Endothelial cell of umbilical vein (primary cell): ENCODE measurements at regions of chr2 and their contacts with region 1.

Region 1: GRCh38 chr2:215920244-215921100 is 92.9 kb downstream of the MREG start:
- DNase-seq: peak; percentile 87
- H3K4me3 ChIP-seq: no peak overlapping the region
- H3K27ac ChIP-seq: no peak overlapping the region
- H3K4me1 ChIP-seq: peaks cover 12% of the 10 kb centered on the region
- H3K27me3 ChIP-seq: no peaks in the 10 kb centered on the region
- CTCF ChIP-seq: peak; percentile 76 to 93
- POLR2A ChIP-seq: no peak

Region 2: GRCh38 chr2:215396595-215397313 is 523.7 kb before region 1 on chr2:
- CTCF ChIA-PET with region 1: interaction called, 3 read pairs
- POLR2A ChIA-PET with region 1: no interaction called
- dilution Hi-C with region 1: no loop called
- intact Hi-C with region 1: loop called (anchors 2 kb)
- DNase-seq: no peak
- H3K4me3 ChIP-seq: no peak overlapping the region
- H3K27ac ChIP-seq: no peak overlapping the region
- H3K4me1 ChIP-seq: peaks cover 20% of the 10 kb centered on the region
- H3K27me3 ChIP-seq: no peaks in the 10 kb centered on the region
- CTCF ChIP-seq: no peak
- POLR2A ChIP-seq: no peak

Region 3: DNA sequence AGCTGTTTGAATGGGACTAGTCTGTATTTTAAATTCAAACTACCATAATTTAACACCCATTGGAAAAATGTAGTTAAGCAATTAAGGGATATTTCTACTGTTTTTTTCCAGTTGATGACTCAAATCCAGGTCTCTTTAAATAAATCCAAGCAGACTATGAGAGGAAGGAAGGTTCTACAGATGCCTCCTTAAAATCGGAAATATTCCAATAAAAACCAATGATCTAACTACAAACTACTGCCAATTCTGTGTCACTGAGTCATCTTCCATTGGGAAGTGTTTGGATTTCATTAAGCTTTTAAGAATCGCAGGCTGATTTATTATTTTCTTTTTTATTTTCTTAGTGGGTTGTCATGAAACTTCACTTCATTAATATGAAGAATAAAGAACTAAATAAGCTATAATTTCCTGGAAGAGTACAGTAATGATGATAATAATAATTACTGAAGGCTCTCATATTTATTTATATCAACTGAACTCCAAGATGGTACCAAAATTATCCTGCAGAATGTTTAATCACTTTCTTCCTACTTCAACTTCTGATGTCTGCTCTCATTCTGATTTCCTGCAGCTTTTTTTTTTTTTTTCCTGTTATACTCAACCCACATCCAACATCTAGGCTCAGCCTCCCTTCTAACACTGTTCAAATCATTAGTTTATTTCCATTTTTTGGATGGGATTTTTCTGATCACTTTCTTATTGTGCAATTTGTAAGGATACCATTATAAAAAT is 318.3 kb before region 1 on chr2:
- CTCF ChIA-PET with region 1: no interaction called
- POLR2A ChIA-PET with region 1: no interaction called
- dilution Hi-C with region 1: no loop called
- intact Hi-C with region 1: loop called (anchors 2 kb)
- DNase-seq: peak; percentile 97
- H3K4me3 ChIP-seq: peak overlapping the region in 1 of 3 experiments; percentile 19
- H3K27ac ChIP-seq: peak overlapping the region; percentile 85
- H3K4me1 ChIP-seq: peaks cover 24% of the 10 kb centered on the region
- H3K27me3 ChIP-seq: no peaks in the 10 kb centered on the region
- CTCF ChIP-seq: no peak
- POLR2A ChIP-seq: peak; percentile 62

Region 4: DNA sequence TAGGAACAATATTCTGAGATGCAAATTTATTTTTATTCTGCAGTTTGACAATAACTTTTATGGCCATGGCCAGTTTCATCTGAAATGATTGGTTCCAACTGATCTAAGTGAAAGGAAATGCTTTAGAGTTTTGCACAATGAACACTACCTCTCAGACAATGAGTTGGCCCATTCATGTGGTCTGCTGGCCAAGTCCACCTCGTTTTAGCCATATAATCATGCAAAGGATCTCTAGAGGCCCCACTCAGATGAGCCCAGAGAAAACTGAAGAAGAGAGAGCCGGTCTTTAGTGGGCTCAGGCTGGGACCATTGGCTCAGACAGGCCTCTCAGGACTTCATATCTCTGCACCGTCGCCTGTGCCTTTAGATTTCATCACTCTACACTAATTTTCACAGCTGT is 161.8 kb before region 1 on chr2:
- CTCF ChIA-PET with region 1: no interaction called
- POLR2A ChIA-PET with region 1: no interaction called
- dilution Hi-C with region 1: no loop called
- intact Hi-C with region 1: loop called (anchors 5 kb)
- DNase-seq: peak; percentile 87
- H3K4me3 ChIP-seq: no peak overlapping the region
- H3K27ac ChIP-seq: peak overlapping the region; percentile 69
- H3K4me1 ChIP-seq: peaks cover 39% of the 10 kb centered on the region
- H3K27me3 ChIP-seq: no peaks in the 10 kb centered on the region
- CTCF ChIP-seq: no peak
- POLR2A ChIP-seq: no peak

Region 5: GRCh38 chr2:215793747-215794595 is 126.5 kb before region 1 on chr2:
- CTCF ChIA-PET with region 1: interaction called, 5 read pairs
- POLR2A ChIA-PET with region 1: no interaction called
- dilution Hi-C with region 1: no loop called
- intact Hi-C with region 1: loop called (anchors 1 kb)
- DNase-seq: peak; percentile 97
- H3K4me3 ChIP-seq: no peak overlapping the region
- H3K27ac ChIP-seq: peak overlapping the region; percentile 82
- H3K4me1 ChIP-seq: peaks cover 44% of the 10 kb centered on the region
- H3K27me3 ChIP-seq: no peaks in the 10 kb centered on the region
- CTCF ChIP-seq: no peak
- POLR2A ChIP-seq: no peak

Region 6: GRCh38 chr2:215949991-215950404 is 29.5 kb after region 1 on chr2:
- CTCF ChIA-PET with region 1: no interaction called
- POLR2A ChIA-PET with region 1: no interaction called
- dilution Hi-C with region 1: no loop called
- intact Hi-C with region 1: no loop called
- DNase-seq: peak; percentile 52
- H3K4me3 ChIP-seq: no peak overlapping the region
- H3K27ac ChIP-seq: no peak overlapping the region
- H3K4me1 ChIP-seq: no peaks in the 10 kb centered on the region
- H3K27me3 ChIP-seq: no peaks in the 10 kb centered on the region
- CTCF ChIP-seq: peak; percentile 35 to 50
- POLR2A ChIP-seq: no peak